CD4-positive, alpha-beta memory T cell (primary cell): ENCODE measurements at regions of chr7 and their contacts with region 1.

Region 1: DNA sequence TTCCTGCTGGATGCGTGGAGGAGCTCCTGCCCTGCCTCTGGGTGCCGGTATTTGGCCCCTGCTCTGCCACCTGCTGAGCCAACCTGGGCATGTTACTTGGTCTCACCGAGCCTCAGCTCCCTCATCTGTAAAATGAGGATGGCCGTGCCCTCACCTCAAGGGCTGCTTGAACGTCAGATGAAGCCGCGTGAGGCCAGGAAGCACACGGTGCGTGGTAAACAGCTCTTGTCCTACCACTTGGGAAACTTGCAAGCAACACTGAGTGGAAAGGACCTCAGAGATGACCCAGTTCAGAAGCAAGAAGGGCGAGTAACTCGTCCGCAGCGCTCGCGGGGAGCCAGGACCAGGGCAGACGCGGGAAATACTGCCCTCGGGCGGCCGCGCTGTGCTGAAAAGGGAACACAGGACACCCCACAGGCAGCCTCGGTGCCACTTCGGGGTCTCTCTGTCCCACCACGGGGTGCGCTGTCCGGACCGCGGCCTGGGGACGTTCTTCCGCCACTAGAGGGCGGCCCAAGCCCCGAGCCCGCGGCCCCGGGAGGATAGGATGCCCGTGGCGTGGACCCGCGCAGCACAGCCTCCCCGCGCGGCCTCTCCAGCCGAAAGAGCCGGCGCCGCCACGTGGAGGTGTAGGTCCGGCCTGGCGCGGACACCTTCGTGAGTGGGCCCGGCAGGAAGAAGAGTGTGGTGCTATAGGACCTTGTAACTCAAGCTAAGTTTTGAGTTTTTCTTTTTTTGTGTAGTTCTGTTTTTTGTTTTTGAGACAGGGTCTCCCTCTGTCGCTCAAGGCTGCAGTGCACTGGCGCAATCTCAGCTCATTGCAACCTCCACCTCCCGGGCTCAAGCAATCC is 94.1 kb downstream of the PRKAG2 start:
- DNase-seq: peak; percentile 44 to 62 (median 53)
- H3K4me3 ChIP-seq: peak overlapping the region in 1 of 2 donors; percentile 5
- H3K4me3 Mint-ChIP-seq: peak overlapping the region; percentile 82 to 96 (median 86)
- H3K27ac ChIP-seq: no peak overlapping the region
- H3K27ac Mint-ChIP-seq: peak overlapping the region; percentile 57 to 95 (median 88)
- H3K4me1 ChIP-seq: peaks cover 12% of the 10 kb centered on the region
- H3K4me1 Mint-ChIP-seq: peaks cover 7 to 21% (median 14%) of the 10 kb centered on the region in 4 donors
- H3K27me3 ChIP-seq: no peaks in the 10 kb centered on the region
- H3K27me3 Mint-ChIP-seq: no peaks in the 10 kb centered on the region

Region 2: GRCh38 chr7:151484971-151485707 is 297.7 kb before region 1 on chr7:
- CTCF ChIA-PET with region 1: no interaction called
- POLR2A ChIA-PET with region 1: no interaction called
- intact Hi-C with region 1: no loop called
- DNase-seq: no peak
- H3K4me3 ChIP-seq: no peak overlapping the region
- H3K4me3 Mint-ChIP-seq: no peak overlapping the region
- H3K27ac ChIP-seq: no peak overlapping the region
- H3K27ac Mint-ChIP-seq: peak overlapping the region in 1 of 7 donors; percentile 72
- H3K4me1 ChIP-seq: peaks cover 8% of the 10 kb centered on the region
- H3K4me1 Mint-ChIP-seq: peaks cover 14 to 35% (median 26%) of the 10 kb centered on the region in 4 donors
- H3K27me3 ChIP-seq: no peaks in the 10 kb centered on the region
- H3K27me3 Mint-ChIP-seq: no peaks in the 10 kb centered on the region

Region 3: GRCh38 chr7:151519765-151520418 is 262.9 kb before region 1 on chr7 and contains the start of gene RHEB:
- CTCF ChIA-PET with region 1: interaction called, 3 read pairs
- POLR2A ChIA-PET with region 1: no interaction called
- intact Hi-C with region 1: loop called (anchors 10 kb)
- DNase-seq: peak; percentile 98
- H3K4me3 ChIP-seq: peak within 1 kb of the TSS; percentile 58 to 82
- H3K4me3 Mint-ChIP-seq: peak within 1 kb of the TSS; percentile 92 to 100 (median 95)
- H3K27ac ChIP-seq: peak within 1 kb of the TSS; percentile 80
- H3K27ac Mint-ChIP-seq: peak within 1 kb of the TSS; percentile 97 to 100 (median 99)
- H3K4me1 ChIP-seq: peaks cover 44% of the 10 kb centered on the region
- H3K4me1 Mint-ChIP-seq: peaks cover 28 to 46% (median 38%) of the 10 kb centered on the region in 4 donors
- H3K27me3 ChIP-seq: no peaks in the 10 kb centered on the region
- H3K27me3 Mint-ChIP-seq: peaks cover 0 to 1% of the 10 kb centered on the region in 2 donors
- total RNA-seq, gene RHEB: 40.8 to 45.1 TPM

Region 4: GRCh38 chr7:151631968-151632749 is 150.7 kb before region 1 on chr7:
- CTCF ChIA-PET with region 1: interaction called, 14 read pairs
- POLR2A ChIA-PET with region 1: interaction called, 3 read pairs
- intact Hi-C with region 1: loop called (anchors 10 kb)
- DNase-seq: peak; percentile 84 to 91 (median 88)
- H3K4me3 ChIP-seq: peak overlapping the region; percentile 73 to 83
- H3K4me3 Mint-ChIP-seq: peak overlapping the region; percentile 89 to 99 (median 96)
- H3K27ac ChIP-seq: peak overlapping the region; percentile 78
- H3K27ac Mint-ChIP-seq: peak overlapping the region; percentile 94 to 99 (median 97)
- H3K4me1 ChIP-seq: peaks cover 18% of the 10 kb centered on the region
- H3K4me1 Mint-ChIP-seq: peaks cover 18 to 38% (median 21%) of the 10 kb centered on the region in 4 donors
- H3K27me3 ChIP-seq: no peaks in the 10 kb centered on the region
- H3K27me3 Mint-ChIP-seq: no peaks in the 10 kb centered on the region

Region 5: GRCh38 chr7:151769188-151769841 is 13.5 kb before region 1 on chr7:
- CTCF ChIA-PET with region 1: interaction called, 40 read pairs
- POLR2A ChIA-PET with region 1: no interaction called
- intact Hi-C with region 1: loop called (anchors 1 kb)
- DNase-seq: peak; percentile 65 to 69 (median 67)
- H3K4me3 ChIP-seq: peak overlapping the region in 1 of 2 donors; percentile 23
- H3K4me3 Mint-ChIP-seq: peak overlapping the region; percentile 67 to 84 (median 80)
- H3K27ac ChIP-seq: peak overlapping the region; percentile 30
- H3K27ac Mint-ChIP-seq: peak overlapping the region; percentile 82 to 98 (median 92)
- H3K4me1 ChIP-seq: peaks cover 36% of the 10 kb centered on the region
- H3K4me1 Mint-ChIP-seq: peaks cover 34 to 64% (median 45%) of the 10 kb centered on the region in 4 donors
- H3K27me3 ChIP-seq: no peaks in the 10 kb centered on the region
- H3K27me3 Mint-ChIP-seq: no peaks in the 10 kb centered on the region

Region 6: DNA sequence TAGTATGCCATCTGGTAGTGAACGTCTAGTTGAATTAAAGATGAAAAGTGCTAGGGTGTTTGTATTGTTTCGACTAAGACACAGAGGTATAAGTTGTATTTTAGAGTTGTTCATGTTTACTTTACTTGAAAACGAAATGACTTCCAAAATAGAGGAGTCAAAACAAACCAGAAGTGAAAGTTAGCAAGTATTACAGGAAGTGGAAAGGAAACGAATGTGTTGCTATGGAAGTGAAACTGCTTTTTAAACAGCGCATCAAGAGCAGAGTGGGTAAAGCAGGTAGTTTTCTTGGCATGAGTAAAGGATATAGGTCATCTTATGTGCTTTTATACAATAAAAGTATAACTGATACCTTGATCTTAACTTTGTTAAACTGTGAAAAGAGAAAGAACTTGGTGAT is 153.4 kb after region 1 on chr7:
- CTCF ChIA-PET with region 1: interaction called, 60 read pairs
- POLR2A ChIA-PET with region 1: interaction called, 4 read pairs
- intact Hi-C with region 1: loop called (anchors 1 kb)
- DNase-seq: peak in 4 of 5 donors; percentile 60 to 76 (median 68)
- H3K4me3 ChIP-seq: peak overlapping the region in 1 of 2 donors; percentile 8
- H3K4me3 Mint-ChIP-seq: peak overlapping the region; percentile 78 to 94 (median 87)
- H3K27ac ChIP-seq: peak overlapping the region; percentile 54
- H3K27ac Mint-ChIP-seq: peak overlapping the region; percentile 85 to 99 (median 98)
- H3K4me1 ChIP-seq: peaks cover 15% of the 10 kb centered on the region
- H3K4me1 Mint-ChIP-seq: peaks cover 16 to 23% (median 21%) of the 10 kb centered on the region in 4 donors
- H3K27me3 ChIP-seq: no peaks in the 10 kb centered on the region
- H3K27me3 Mint-ChIP-seq: no peaks in the 10 kb centered on the region